ENCODE measurements at regions of chr12 and their contacts with region 1.

Region 1: DNA sequence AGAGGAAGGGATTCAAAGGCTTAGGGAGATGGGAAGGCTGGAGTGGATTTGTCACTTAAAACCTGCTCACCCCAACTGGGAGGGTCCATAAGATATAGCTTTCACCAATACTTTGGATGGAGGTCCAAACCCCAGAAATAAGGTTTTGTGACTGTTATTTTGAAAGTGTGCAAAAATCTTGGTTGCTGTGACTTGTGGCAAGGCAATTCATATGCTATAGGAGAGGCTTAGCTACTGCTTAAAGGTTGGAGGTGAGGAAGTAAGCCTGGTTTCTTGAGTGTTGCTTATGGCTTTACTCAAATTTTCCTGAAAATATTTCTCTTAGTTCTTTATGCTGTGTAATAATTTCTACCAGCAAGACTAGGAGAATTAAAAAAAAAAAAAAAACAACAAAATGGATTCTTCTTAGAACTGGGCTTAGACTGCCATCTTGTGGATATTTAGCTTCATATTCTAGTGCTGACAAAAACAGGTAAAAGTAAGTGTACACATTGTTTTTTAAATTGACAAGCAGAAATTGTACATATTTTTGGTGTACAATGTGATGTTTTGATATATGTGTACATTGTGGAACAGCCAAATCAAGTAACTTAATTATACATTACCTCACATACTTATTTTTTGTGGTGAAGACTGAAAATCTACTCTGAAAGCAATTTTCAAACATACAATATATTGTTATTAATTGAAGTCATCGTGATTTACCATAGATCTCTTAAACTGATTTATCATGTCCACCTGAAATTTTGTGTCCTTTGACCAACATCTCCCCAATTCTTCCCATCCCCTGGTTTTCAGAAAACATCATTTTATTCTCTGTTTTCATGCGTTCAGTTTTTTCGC is 23.0 kb downstream of the PDE6H start:
- DNase-seq: no peak
- H3K4me3 Mint-ChIP-seq: no peak overlapping the region
- H3K27ac Mint-ChIP-seq: no peak overlapping the region
- H3K4me1 Mint-ChIP-seq: peaks cover 25% of the 10 kb centered on the region
- H3K27me3 Mint-ChIP-seq: no peaks in the 10 kb centered on the region

Region 2: GRCh38 chr12:14629832-14630710 is 365.7 kb before region 1 on chr12:
- CTCF ChIA-PET with region 1: no interaction called
- intact Hi-C with region 1: loop called (anchors 1 kb)
- DNase-seq: peak; percentile 79
- H3K4me3 Mint-ChIP-seq: no peak overlapping the region
- H3K27ac Mint-ChIP-seq: no peak overlapping the region
- H3K4me1 Mint-ChIP-seq: no peaks in the 10 kb centered on the region
- H3K27me3 Mint-ChIP-seq: no peaks in the 10 kb centered on the region

Region 3: DNA sequence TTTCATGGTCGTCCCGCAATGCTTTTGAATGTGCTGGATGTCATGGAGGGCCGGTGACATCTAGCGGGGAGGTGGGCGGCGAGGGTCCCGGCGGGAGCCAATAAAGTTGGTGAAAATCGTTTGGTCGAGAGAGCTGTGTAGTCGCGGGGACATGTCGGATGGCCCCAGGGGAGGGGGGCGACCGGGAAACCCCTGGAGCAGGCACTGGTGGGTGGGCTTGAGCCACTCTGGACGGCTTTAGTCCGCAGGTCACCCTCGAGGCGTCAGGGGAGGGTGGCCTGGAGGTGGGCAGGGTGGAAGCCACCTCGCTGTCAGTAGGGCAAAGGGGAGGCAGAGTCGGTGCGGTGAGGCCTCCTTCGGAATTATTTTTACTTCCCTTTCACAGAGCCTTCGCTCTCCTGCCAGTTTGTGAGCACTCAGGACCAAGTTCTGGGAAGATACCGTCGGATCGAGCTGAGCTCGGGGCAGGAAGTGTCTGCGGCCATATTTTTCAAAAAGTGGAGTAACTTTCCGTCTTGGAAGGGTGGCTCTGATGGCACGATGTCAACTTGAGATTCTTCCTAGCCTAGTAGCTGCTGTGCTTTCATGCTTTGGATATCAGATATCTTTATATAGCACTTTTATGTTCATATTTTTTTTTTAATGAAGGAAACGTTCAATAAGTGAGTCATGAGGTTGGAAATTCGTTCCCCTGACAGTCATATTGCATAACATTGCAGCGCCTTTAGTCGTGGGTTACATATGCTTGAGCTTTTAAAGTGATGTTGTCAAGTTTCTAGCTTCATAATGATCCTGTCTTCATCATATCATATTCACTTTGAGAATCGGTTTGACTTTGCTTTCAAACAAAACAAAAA is 220.7 kb before region 1 on chr12:
- CTCF ChIA-PET with region 1: interaction called, 6 read pairs
- intact Hi-C with region 1: loop called (anchors 1 kb)
- DNase-seq: peak; percentile 58
- H3K4me3 Mint-ChIP-seq: peak overlapping the region; percentile 95
- H3K27ac Mint-ChIP-seq: peak overlapping the region; percentile 94
- H3K4me1 Mint-ChIP-seq: peaks cover 36% of the 10 kb centered on the region
- H3K27me3 Mint-ChIP-seq: no peaks in the 10 kb centered on the region

Region 4: GRCh38 chr12:14845350-14845750 is 150.5 kb before region 1 on chr12:
- CTCF ChIA-PET with region 1: interaction called, 89 read pairs
- intact Hi-C with region 1: loop called (anchors 1 kb)
- DNase-seq: peak; percentile 63
- H3K4me3 Mint-ChIP-seq: no peak overlapping the region
- H3K27ac Mint-ChIP-seq: no peak overlapping the region
- H3K4me1 Mint-ChIP-seq: peaks cover 9% of the 10 kb centered on the region
- H3K27me3 Mint-ChIP-seq: no peaks in the 10 kb centered on the region

Region 5: DNA sequence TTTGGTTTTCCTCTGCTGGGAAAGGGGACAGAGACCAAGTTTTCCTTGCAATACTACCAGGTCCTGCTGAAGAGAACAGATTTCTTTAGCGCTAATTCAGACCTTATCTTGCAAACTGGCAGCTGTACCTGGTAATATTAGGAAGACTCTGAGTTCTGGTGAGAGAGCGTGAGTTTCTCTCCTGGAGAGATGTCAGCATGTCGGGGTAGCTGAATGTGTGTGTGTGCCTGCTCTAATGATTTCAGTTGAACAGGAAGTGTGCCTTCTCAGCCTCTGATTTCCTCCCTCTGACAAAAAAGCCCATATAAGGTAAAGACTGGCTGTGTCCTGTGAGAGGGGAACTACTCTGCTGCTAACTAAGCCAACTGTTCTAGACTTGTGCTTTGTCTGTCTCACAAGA is 47.1 kb before region 1 on chr12:
- CTCF ChIA-PET with region 1: interaction called, 4 read pairs
- intact Hi-C with region 1: loop called (anchors 5 kb)
- DNase-seq: peak; percentile 73
- H3K4me3 Mint-ChIP-seq: peak overlapping the region; percentile 71
- H3K27ac Mint-ChIP-seq: peak overlapping the region; percentile 95
- H3K4me1 Mint-ChIP-seq: peaks cover 82% of the 10 kb centered on the region
- H3K27me3 Mint-ChIP-seq: no peaks in the 10 kb centered on the region

Region 6: GRCh38 chr12:15013634-15014179 is 17.9 kb after region 1 on chr12:
- CTCF ChIA-PET with region 1: no interaction called
- intact Hi-C with region 1: no loop called
- DNase-seq: no peak
- H3K4me3 Mint-ChIP-seq: no peak overlapping the region
- H3K27ac Mint-ChIP-seq: no peak overlapping the region
- H3K4me1 Mint-ChIP-seq: no peaks in the 10 kb centered on the region
- H3K27me3 Mint-ChIP-seq: peaks cover 2% of the 10 kb centered on the region

Region 7: GRCh38 chr12:15268927-15269552 is 273.2 kb after region 1 on chr12:
- CTCF ChIA-PET with region 1: interaction called, 3 read pairs
- intact Hi-C with region 1: loop called (anchors 1 kb)
- DNase-seq: peak; percentile 56
- H3K4me3 Mint-ChIP-seq: no peak overlapping the region
- H3K27ac Mint-ChIP-seq: no peak overlapping the region
- H3K4me1 Mint-ChIP-seq: no peaks in the 10 kb centered on the region
- H3K27me3 Mint-ChIP-seq: no peaks in the 10 kb centered on the region

Measured in activated naive CD4-positive, alpha-beta T cell treated with anti-CD3 and anti-CD28 coated beads for 36 hours (primary cell).